CD8-positive, alpha-beta T cell (primary cell): ENCODE measurements at regions of chr10 and their contacts with region 1.

Region 1: DNA sequence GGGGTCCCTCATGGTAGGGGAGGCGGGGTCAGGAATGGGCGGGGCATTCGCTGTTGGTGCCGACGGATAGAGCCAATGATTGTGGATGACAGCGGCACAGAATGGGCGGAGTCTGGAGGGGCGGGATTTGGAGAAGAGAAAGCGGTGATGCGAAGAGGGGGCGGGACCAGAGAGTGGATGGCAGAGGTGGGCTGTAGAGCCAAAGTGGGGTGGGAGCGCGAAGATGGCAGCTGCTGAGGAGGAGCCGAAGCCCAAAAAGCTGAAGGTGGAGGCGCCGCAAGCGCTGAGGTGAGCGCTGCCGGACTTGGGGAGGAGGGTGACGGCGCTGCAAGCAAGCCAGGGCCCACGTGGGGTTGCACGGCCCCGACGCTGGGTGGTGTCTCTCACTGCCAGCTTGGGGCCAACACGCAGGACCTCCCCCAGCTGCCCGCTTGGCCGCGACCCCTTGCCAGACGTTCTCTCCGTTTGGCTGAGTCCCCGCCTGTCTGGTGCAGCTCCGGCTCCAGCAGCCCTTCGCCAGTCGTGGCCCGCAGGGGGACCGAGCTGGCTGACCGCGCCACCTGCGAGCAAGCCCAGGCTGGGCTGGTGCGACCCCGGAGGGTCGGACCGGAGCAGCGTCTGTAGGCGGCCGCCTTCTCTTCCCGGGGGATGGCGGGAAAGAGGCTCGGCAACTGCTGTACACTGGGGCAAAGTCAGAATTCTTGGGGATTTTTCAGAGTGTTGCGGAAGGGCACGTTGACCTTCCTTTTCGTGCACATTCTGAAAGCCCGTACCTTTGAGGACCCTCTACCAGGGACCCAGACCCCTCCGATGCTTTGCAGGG is at the start of gene ADK:
- DNase-seq: peak; percentile 99 to 100 (median 100)
- ATAC-seq: peak; percentile 96
- H3K4me3 ChIP-seq: peak within 1 kb of the TSS; percentile 70 to 78
- H3K4me3 Mint-ChIP-seq: no peak within 1 kb of the TSS
- H3K27ac ChIP-seq: peak within 1 kb of the TSS; percentile 86 to 99
- H3K27ac Mint-ChIP-seq: no peak within 1 kb of the TSS
- H3K4me1 ChIP-seq: peaks cover 30% of the 10 kb centered on the region
- H3K4me1 Mint-ChIP-seq: peaks cover 42% of the 10 kb centered on the region
- H3K27me3 ChIP-seq: no peaks in the 10 kb centered on the region
- H3K27me3 Mint-ChIP-seq: no peaks in the 10 kb centered on the region
- CTCF ChIP-seq: peak; percentile 22
- total RNA-seq, gene ADK: 20.7 to 21.8 TPM

Region 2: DNA sequence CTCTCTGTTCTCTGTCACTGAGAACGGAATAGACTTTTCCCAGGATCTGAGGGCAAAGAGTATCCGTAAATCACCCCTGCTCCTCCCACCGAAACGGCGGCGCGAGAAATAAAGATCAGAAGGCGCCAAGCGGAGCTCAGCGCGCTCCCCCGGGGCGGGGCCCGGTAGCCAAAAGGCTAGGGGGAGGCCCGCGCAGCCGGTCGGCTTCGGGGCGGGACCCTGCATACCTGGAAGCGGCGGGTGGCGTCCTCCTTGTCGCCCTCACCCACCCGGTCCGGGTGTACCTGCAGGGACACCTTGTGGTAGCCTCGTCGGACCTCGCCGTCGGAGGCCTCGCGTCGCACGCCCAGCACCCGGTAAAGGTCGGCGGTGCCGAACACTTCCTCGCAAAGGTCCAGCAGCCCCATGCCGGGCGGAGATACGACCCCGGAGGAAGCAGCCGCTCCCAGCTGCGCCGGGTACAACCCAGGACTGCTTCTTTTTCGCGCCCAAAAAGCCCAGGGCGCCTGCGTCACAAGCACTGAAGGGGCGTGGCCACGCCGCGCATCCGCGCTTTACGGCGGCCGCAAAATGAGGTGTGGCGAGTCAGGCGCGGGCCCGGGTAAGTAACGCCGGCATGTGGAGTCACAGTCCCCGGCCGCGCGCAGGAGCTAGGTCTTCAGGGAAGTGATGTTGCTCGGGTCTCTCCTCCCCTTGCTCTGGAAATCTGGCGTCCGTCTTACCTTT is 904.3 kb before region 1 on chr10 and contains the start of gene DNAJC9:
- CTCF ChIA-PET with region 1: no interaction called
- POLR2A ChIA-PET with region 1: no interaction called
- intact Hi-C with region 1: loop called in 1 of 2 experiments (anchors 5 kb)
- DNase-seq: peak; percentile 95 to 98 (median 97)
- ATAC-seq: peak; percentile 88
- H3K4me3 ChIP-seq: peak within 1 kb of the TSS; percentile 88 to 95
- H3K4me3 Mint-ChIP-seq: peak within 1 kb of the TSS; percentile 96
- H3K27ac ChIP-seq: peak within 1 kb of the TSS; percentile 85 to 89
- H3K27ac Mint-ChIP-seq: peak within 1 kb of the TSS; percentile 97
- H3K4me1 ChIP-seq: peaks cover 34% of the 10 kb centered on the region
- H3K4me1 Mint-ChIP-seq: peaks cover 59% of the 10 kb centered on the region
- H3K27me3 ChIP-seq: no peaks in the 10 kb centered on the region
- H3K27me3 Mint-ChIP-seq: no peaks in the 10 kb centered on the region
- CTCF ChIP-seq: peak; percentile 19
- total RNA-seq, gene DNAJC9: 17.6 to 18.4 TPM

Region 3: DNA sequence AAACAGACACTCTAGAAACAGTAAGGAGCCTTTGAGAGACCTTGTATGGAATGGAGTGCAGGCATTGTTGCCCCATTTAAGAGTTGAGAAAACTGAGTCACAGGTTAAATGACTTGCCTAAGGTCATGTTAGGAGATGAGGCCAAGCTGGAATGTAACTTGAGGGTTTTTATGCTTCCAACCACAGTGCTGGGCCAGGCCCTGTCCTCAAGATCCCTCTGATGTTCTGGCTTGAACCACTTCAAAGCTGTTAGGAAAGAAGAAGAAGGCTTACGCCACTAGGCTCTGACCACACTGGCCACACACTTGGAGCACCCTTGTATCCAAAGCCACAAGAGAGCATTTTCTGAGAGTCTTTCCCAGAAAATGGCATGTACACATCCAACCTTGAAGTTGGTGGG is 197.6 kb before region 1 on chr10:
- CTCF ChIA-PET with region 1: no interaction called
- POLR2A ChIA-PET with region 1: no interaction called
- intact Hi-C with region 1: no loop called
- DNase-seq: no peak
- ATAC-seq: no peak
- H3K4me3 ChIP-seq: no peak overlapping the region
- H3K4me3 Mint-ChIP-seq: no peak overlapping the region
- H3K27ac ChIP-seq: no peak overlapping the region
- H3K27ac Mint-ChIP-seq: no peak overlapping the region
- H3K4me1 ChIP-seq: peaks cover 23% of the 10 kb centered on the region
- H3K4me1 Mint-ChIP-seq: peaks cover 27% of the 10 kb centered on the region
- H3K27me3 ChIP-seq: no peaks in the 10 kb centered on the region
- H3K27me3 Mint-ChIP-seq: no peaks in the 10 kb centered on the region
- CTCF ChIP-seq: no peak

Region 4: GRCh38 chr10:73997787-73998622 is 153.3 kb before region 1 on chr10 and contains the start of gene VCL:
- CTCF ChIA-PET with region 1: no interaction called
- POLR2A ChIA-PET with region 1: no interaction called
- intact Hi-C with region 1: loop called in 1 of 2 experiments (anchors 5 kb)
- DNase-seq: peak; percentile 91 to 97 (median 95)
- ATAC-seq: peak; percentile 96
- H3K4me3 ChIP-seq: peak within 1 kb of the TSS; percentile 82
- H3K4me3 Mint-ChIP-seq: peak within 1 kb of the TSS; percentile 100
- H3K27ac ChIP-seq: peak within 1 kb of the TSS; percentile 63
- H3K27ac Mint-ChIP-seq: peak within 1 kb of the TSS; percentile 96
- H3K4me1 ChIP-seq: peaks cover 32% of the 10 kb centered on the region
- H3K4me1 Mint-ChIP-seq: peaks cover 45% of the 10 kb centered on the region
- H3K27me3 ChIP-seq: no peaks in the 10 kb centered on the region
- H3K27me3 Mint-ChIP-seq: no peaks in the 10 kb centered on the region
- CTCF ChIP-seq: no peak
- total RNA-seq, gene VCL: 6.6 to 9.4 TPM

Region 5: GRCh38 chr10:74189999-74190421 is 38.7 kb after region 1 on chr10:
- CTCF ChIA-PET with region 1: interaction called, 4 read pairs
- POLR2A ChIA-PET with region 1: interaction called, 3 read pairs
- intact Hi-C with region 1: loop called in 1 of 2 experiments (anchors 5 kb)
- DNase-seq: peak in 5 of 9 experiments; percentile 24 to 65 (median 42)
- ATAC-seq: peak; percentile 48
- H3K4me3 ChIP-seq: peak overlapping the region in 1 of 2 experiments; percentile 4
- H3K4me3 Mint-ChIP-seq: peak overlapping the region; percentile 49
- H3K27ac ChIP-seq: peak overlapping the region; percentile 33 to 73
- H3K27ac Mint-ChIP-seq: peak overlapping the region; percentile 90
- H3K4me1 ChIP-seq: peaks cover 34% of the 10 kb centered on the region
- H3K4me1 Mint-ChIP-seq: peaks cover 67% of the 10 kb centered on the region
- H3K27me3 ChIP-seq: no peaks in the 10 kb centered on the region
- H3K27me3 Mint-ChIP-seq: no peaks in the 10 kb centered on the region
- CTCF ChIP-seq: no peak

Region 6: GRCh38 chr10:74234569-74234968 is 83.3 kb after region 1 on chr10:
- CTCF ChIA-PET with region 1: interaction called, 11 read pairs
- POLR2A ChIA-PET with region 1: interaction called, 9 read pairs
- intact Hi-C with region 1: loop called (anchors 1 to 2 kb)
- DNase-seq: peak in 1 of 9 experiments; percentile 29
- ATAC-seq: no peak
- H3K4me3 ChIP-seq: no peak overlapping the region
- H3K4me3 Mint-ChIP-seq: no peak overlapping the region
- H3K27ac ChIP-seq: no peak overlapping the region
- H3K27ac Mint-ChIP-seq: no peak overlapping the region
- H3K4me1 ChIP-seq: no peaks in the 10 kb centered on the region
- H3K4me1 Mint-ChIP-seq: peaks cover 8% of the 10 kb centered on the region
- H3K27me3 ChIP-seq: no peaks in the 10 kb centered on the region
- H3K27me3 Mint-ChIP-seq: no peaks in the 10 kb centered on the region
- CTCF ChIP-seq: peak; percentile 73

Region 7: GRCh38 chr10:75111367-75111906 is 960.2 kb after region 1 on chr10 and contains the start of gene SAMD8:
- CTCF ChIA-PET with region 1: no interaction called
- POLR2A ChIA-PET with region 1: interaction called, 4 read pairs
- intact Hi-C with region 1: loop called (anchors 1 kb)
- DNase-seq: peak; percentile 83 to 98 (median 94)
- ATAC-seq: peak; percentile 77
- H3K4me3 ChIP-seq: peak within 1 kb of the TSS; percentile 68 to 99
- H3K4me3 Mint-ChIP-seq: peak within 1 kb of the TSS; percentile 83
- H3K27ac ChIP-seq: peak within 1 kb of the TSS; percentile 77 to 97
- H3K27ac Mint-ChIP-seq: peak within 1 kb of the TSS; percentile 97
- H3K4me1 ChIP-seq: peaks cover 20% of the 10 kb centered on the region
- H3K4me1 Mint-ChIP-seq: peaks cover 56% of the 10 kb centered on the region
- H3K27me3 ChIP-seq: no peaks in the 10 kb centered on the region
- H3K27me3 Mint-ChIP-seq: no peaks in the 10 kb centered on the region
- CTCF ChIP-seq: no peak
- total RNA-seq, gene SAMD8: 41.2 to 41.4 TPM